Calu3 (cell line): ENCODE measurements at regions of chr14 and their contacts with region 1.

Region 1: GRCh38 chr14:86481105-86481504 is 951.2 kb downstream of the FLRT2 start:
- DNase-seq: no peak
- H3K4me3 Mint-ChIP-seq: no peak overlapping the region
- H3K27ac Mint-ChIP-seq: no peak overlapping the region
- H3K4me1 Mint-ChIP-seq: peaks cover 19% of the 10 kb centered on the region
- H3K27me3 Mint-ChIP-seq: no peaks in the 10 kb centered on the region
- CTCF ChIP-seq: no peak

Region 2: GRCh38 chr14:86662334-86662733 is 181.2 kb after region 1 on chr14:
- CTCF ChIA-PET with region 1: no interaction called
- intact Hi-C with region 1: loop called (anchors 10 kb)
- DNase-seq: no peak
- H3K4me3 Mint-ChIP-seq: no peak overlapping the region
- H3K27ac Mint-ChIP-seq: no peak overlapping the region
- H3K4me1 Mint-ChIP-seq: no peaks in the 10 kb centered on the region
- H3K27me3 Mint-ChIP-seq: no peaks in the 10 kb centered on the region
- CTCF ChIP-seq: no peak

Region 3: GRCh38 chr14:86708846-86709339 is 227.8 kb after region 1 on chr14:
- CTCF ChIA-PET with region 1: no interaction called
- intact Hi-C with region 1: loop called (anchors 5 kb)
- DNase-seq: no peak
- H3K4me3 Mint-ChIP-seq: peak overlapping the region; percentile 39
- H3K27ac Mint-ChIP-seq: peak overlapping the region; percentile 59
- H3K4me1 Mint-ChIP-seq: peaks cover 40% of the 10 kb centered on the region
- H3K27me3 Mint-ChIP-seq: no peaks in the 10 kb centered on the region
- CTCF ChIP-seq: no peak

Region 4: GRCh38 chr14:86787717-86788116 is 306.6 kb after region 1 on chr14:
- CTCF ChIA-PET with region 1: no interaction called
- intact Hi-C with region 1: loop called (anchors 10 kb)
- DNase-seq: no peak
- H3K4me3 Mint-ChIP-seq: no peak overlapping the region
- H3K27ac Mint-ChIP-seq: peak overlapping the region; percentile 30
- H3K4me1 Mint-ChIP-seq: peaks cover 7% of the 10 kb centered on the region
- H3K27me3 Mint-ChIP-seq: no peaks in the 10 kb centered on the region
- CTCF ChIP-seq: no peak